ENCODE measurements at regions of chr13 and their contacts with region 1.

Region 1: DNA sequence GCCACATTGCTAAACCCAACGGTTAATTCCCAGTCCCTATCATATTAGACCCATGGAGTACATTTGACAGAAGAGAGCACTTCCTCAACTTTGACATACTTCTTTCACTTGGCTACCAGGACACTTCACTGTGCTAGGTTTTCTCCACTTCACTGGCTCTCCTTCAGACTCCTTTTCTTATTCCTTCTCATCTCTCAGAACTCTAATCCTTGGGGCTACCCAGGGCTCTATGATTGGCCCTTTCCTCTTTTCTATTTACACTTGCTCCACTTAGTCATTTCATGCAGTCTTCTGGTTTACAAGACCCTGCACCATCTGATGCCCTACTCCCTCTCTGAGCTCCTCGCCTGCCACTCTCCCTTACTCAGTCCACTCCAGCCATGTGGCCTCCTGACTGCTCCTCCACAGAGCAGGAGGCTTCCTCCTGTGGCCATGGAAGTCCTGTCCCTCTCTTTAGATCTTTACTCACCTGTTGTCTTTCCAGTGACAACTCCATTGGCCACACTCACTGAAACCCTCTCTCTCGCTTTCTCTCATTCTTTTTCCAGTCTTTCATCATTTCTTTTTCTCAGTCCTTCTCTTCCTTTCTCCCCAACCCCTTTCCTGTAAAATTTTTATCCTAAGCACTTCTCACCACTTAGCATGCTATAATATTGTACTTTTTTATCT is 90.4 kb downstream of the TBC1D4 start:
- DNase-seq: no peak
- ATAC-seq: peak in 7 of 8 donors; percentile 29 to 59 (median 46)
- H3K4me3 ChIP-seq: no peak overlapping the region
- H3K27ac ChIP-seq: peak overlapping the region in 3 of 10 donors; percentile 18 to 41 (median 38)
- H3K4me1 ChIP-seq: peaks cover 0 to 54% (median 15%) of the 10 kb centered on the region in 9 donors
- H3K27me3 ChIP-seq: no peaks in the 10 kb centered on the region
- CTCF ChIP-seq: no peak

Region 2: GRCh38 chr13:75432045-75432444 is 40.5 kb after region 1 on chr13:
- intact Hi-C with region 1: loop called in 1 of 10 experiments (anchors 2 kb)
- DNase-seq: no peak
- ATAC-seq: peak in 3 of 8 donors; percentile 11 to 59 (median 24)
- H3K4me3 ChIP-seq: no peak overlapping the region
- H3K27ac ChIP-seq: peak overlapping the region in 7 of 10 donors; percentile 19 to 54 (median 35)
- H3K4me1 ChIP-seq: peaks cover 0 to 65% (median 22%) of the 10 kb centered on the region in 9 donors
- H3K27me3 ChIP-seq: no peaks in the 10 kb centered on the region
- CTCF ChIP-seq: peak in 2 of 9 donors; percentile 8 to 15

Measured in heart right ventricle (tissue), 16 donors.